Colonic mucosa (tissue), 4 donors: ENCODE measurements at regions of chrX and their contacts with region 1.

Region 1: GRCh38 chrX:153032397-153033118 is 23.7 kb upstream of the PNMA3 start:
- DNase-seq: peak; percentile 65
- H3K4me3 ChIP-seq: peak overlapping the region; percentile 27
- H3K27ac ChIP-seq: no peak overlapping the region
- H3K4me1 ChIP-seq: no peaks in the 10 kb centered on the region
- H3K27me3 ChIP-seq: no peaks in the 10 kb centered on the region
- CTCF ChIP-seq: peak; percentile 63

Region 2: DNA sequence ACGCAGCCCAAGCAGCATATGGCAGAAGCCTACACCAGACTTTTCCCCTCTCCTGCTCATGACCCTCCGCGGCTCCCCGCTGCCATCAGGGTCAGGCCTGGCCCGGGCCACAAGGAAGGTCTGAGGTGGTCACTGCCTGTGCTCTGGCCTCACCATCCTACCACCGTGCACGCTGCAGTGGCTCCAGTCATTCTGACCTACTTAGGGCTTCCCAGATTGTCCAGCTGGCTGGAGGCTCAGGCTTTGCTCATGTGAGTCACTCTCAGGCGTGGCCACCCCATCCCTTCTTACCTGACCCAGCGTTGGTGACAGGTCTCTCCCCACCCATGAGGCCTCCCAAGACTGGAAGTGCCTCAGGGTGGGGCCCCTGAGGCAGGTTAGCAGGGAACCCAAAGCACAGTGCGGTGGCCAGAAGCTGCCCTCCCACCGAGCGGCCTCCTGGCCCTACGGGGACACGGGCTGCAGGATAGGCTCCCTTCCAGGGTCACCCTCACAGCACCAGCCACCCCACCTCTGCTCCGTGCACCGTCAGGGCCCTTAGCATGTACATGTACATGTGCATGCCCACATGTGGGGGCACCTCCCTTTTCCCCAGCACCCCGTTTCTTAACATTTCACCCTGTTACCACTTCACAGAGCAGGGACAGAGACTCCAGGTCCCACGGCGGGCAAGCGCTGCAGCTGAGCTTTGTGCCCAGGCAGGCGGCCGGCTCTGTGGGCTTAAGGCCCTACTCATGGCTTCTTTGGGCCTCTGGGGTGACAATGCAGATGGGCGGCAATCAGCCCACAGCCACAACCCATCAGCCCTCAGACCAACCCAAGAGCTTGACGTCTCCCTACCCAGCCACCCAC is 411.1 kb after region 1 on chrX:
- intact Hi-C with region 1: loop called (anchors 5 kb)
- DNase-seq: no peak
- H3K4me3 ChIP-seq: no peak overlapping the region
- H3K27ac ChIP-seq: no peak overlapping the region
- H3K4me1 ChIP-seq: no peaks in the 10 kb centered on the region
- H3K27me3 ChIP-seq: no peaks in the 10 kb centered on the region
- CTCF ChIP-seq: no peak

Region 3: GRCh38 chrX:153507484-153508178 is 475.1 kb after region 1 on chrX:
- intact Hi-C with region 1: loop called (anchors 5 kb)
- DNase-seq: peak; percentile 80
- H3K4me3 ChIP-seq: no peak overlapping the region
- H3K27ac ChIP-seq: no peak overlapping the region
- H3K4me1 ChIP-seq: no peaks in the 10 kb centered on the region
- H3K27me3 ChIP-seq: no peaks in the 10 kb centered on the region
- CTCF ChIP-seq: peak; percentile 80